ENCODE measurements at regions of chr4 and their contacts with region 1.

Region 1: GRCh38 chr4:17614416-17615299 is at the start of gene MED28:
- DNase-seq: peak; percentile 68
- ATAC-seq: peak; percentile 89
- H3K4me3 ChIP-seq: peak within 1 kb of the TSS; percentile 79
- H3K27ac ChIP-seq: peak within 1 kb of the TSS; percentile 84
- H3K4me1 ChIP-seq: peaks cover 6% of the 10 kb centered on the region; the same call in 1 of the 2 replicates
- H3K27me3 ChIP-seq: no peaks in the 10 kb centered on the region
- CTCF ChIP-seq: 0 out of 6 replicates have a peak, but pooled peaks of 1 of the 3 experiments have one; percentile 2
- EP300 ChIP-seq: no peak
- POLR2A ChIP-seq: peak; percentile 91
- RAD21 ChIP-seq: no peak
- polyA plus RNA-seq, gene MED28: 44.4 to 77.4 TPM

Region 2: DNA sequence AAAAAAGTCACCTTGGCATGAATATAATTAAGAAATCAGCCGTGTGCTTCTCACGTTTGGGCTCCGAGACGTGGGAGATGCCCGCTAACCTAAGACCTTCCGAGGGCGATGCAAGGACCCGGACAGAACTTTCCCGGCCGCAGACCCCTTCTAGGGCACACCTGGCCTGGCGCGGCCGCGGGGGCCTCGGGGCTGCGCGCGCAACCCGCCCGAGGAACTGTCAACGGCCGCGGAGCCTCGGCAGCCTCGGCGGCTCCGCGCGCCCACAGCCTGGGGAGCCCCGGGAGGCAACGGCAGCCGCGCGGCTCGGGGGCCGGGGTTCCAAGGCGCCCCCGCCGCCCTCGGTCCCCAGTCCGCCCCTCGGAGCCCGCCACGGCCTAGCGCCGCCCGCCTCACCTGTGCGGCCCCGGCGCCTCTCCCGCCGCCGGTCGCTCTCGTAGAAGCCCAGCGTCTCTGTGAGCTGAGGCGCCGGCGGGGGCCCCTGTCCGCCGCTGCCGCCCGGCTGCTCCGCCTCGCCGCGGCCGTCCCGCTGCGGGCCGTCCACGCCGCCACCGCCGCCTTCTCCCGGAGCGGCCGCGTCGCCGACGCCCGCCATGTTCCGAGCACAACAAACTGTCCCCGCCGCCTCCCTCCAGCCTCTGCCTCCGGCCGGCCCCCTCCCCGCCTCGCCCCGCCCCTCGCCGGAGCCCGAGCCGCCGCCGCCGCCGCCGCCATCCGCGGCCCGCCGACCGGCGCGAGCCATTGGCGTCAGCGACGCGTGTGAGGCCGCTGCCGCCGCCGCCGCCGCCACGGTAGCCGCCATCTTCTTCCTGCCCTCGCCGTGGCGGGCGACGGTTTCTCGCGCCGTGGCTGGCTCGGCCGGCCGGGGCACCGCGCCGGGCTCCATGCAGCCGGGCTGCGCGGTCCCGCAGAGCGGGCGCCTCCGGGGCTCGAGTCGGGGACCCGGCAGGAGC is 1388.5 kb before region 1 on chr4 and contains the start of gene TAPT1:
- CTCF ChIA-PET with region 1: no interaction called
- POLR2A ChIA-PET with region 1: no interaction called
- RAD21 ChIA-PET with region 1: no interaction called
- SMC1A ChIA-PET with region 1: no interaction called
- in situ Hi-C with region 1: no loop called
- intact Hi-C with region 1: loop called (anchors 10 kb)
- DNase-seq: no peak
- ATAC-seq: peak; percentile 67
- H3K4me3 ChIP-seq: peak within 1 kb of the TSS; percentile 85
- H3K27ac ChIP-seq: peak within 1 kb of the TSS; percentile 76
- H3K4me1 ChIP-seq: peaks cover 4% of the 10 kb centered on the region
- H3K27me3 ChIP-seq: no peaks in the 10 kb centered on the region
- CTCF ChIP-seq: no peak
- EP300 ChIP-seq: no peak
- POLR2A ChIP-seq: peak; percentile 80
- RAD21 ChIP-seq: no peak
- polyA plus RNA-seq, gene TAPT1: 1.2 to 2.3 TPM

Region 3: GRCh38 chr4:17535906-17536305 is 78.8 kb before region 1 on chr4:
- CTCF ChIA-PET with region 1: no interaction called
- POLR2A ChIA-PET with region 1: no interaction called
- RAD21 ChIA-PET with region 1: no interaction called
- SMC1A ChIA-PET with region 1: no interaction called
- in situ Hi-C with region 1: no loop called
- intact Hi-C with region 1: no loop called
- DNase-seq: no peak
- ATAC-seq: peak; percentile 36; the same call in 1 of the 3 replicates
- H3K4me3 ChIP-seq: no peak overlapping the region
- H3K27ac ChIP-seq: no peak overlapping the region
- H3K4me1 ChIP-seq: no peaks in the 10 kb centered on the region
- H3K27me3 ChIP-seq: no peaks in the 10 kb centered on the region
- CTCF ChIP-seq: no peak
- EP300 ChIP-seq: no peak
- POLR2A ChIP-seq: no peak
- RAD21 ChIP-seq: no peak

Region 4: DNA sequence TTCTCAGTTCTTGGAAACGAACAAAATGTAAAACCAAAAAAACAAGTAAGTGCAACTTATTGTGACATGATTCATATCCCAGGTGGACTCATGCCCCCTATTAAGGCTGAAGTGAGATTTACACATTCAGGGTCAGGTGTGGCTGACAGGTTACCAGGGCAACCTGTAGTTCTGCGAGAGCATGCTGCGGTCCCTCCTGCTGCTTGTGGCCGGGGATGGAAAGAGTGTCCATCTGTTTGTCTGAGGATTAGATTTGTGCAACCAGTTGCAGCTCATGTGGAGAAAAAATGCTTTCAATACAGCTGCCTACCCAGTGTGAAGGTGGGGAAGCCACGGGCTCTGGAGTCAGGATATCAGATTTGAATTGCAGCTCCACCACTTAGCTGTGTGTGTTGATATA is 88.0 kb after region 1 on chr4:
- CTCF ChIA-PET with region 1: no interaction called
- POLR2A ChIA-PET with region 1: no interaction called
- RAD21 ChIA-PET with region 1: no interaction called
- SMC1A ChIA-PET with region 1: no interaction called
- in situ Hi-C with region 1: no loop called
- intact Hi-C with region 1: no loop called
- DNase-seq: no peak
- ATAC-seq: no peak
- H3K4me3 ChIP-seq: no peak overlapping the region
- H3K27ac ChIP-seq: no peak overlapping the region
- H3K4me1 ChIP-seq: no peaks in the 10 kb centered on the region
- H3K27me3 ChIP-seq: no peaks in the 10 kb centered on the region
- CTCF ChIP-seq: no peak
- EP300 ChIP-seq: no peak
- POLR2A ChIP-seq: no peak
- RAD21 ChIP-seq: no peak